ENCODE measurements at regions of chr9 and their contacts with region 1.

Region 1: GRCh38 chr9:124852829-124853531 is at the start of gene WDR38:
- DNase-seq: peak; percentile 94
- H3K27ac ChIP-seq: peak within 1 kb of the TSS; percentile 69
- CTCF ChIP-seq: peak; percentile 100

Region 2: DNA sequence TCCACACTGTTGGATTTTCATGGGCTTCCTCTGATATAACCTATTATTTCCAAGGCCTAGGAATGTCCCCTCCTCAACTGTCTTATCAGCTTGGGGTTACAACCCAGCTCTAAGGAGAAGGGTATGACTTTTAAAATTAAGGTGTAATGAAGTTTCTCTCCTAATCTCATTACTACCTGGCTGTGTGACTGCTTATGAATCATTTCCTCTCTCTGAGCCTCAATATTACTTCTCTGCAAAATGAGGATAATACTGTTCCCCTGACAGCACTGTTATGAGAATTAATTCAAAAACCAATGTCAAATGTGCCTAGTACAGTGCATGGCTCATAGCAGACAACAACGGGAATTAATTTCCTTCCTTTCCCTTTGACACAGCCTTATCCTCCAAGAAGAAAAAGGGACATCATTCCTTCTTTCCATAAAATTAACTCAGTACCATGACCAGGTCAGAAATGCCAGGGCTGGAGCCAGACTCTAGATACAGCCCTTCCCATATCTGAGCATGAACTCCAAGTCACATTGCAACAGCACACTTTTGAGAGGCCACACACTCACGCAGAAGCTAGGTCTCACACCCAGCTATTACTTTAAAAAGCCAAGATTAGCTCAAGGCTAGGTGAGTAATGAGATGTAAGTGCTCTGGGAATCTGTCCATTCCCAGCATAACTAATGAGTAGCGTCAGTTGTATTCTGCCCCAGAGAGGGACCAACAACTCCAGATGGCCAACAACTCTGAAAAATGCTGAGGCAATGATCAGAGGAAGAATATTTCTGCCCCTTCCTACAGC is 200.6 kb before region 1 on chr9:
- CTCF ChIA-PET with region 1: no interaction called
- POLR2A ChIA-PET with region 1: no interaction called
- DNase-seq: peak; percentile 97
- H3K27ac ChIP-seq: no peak overlapping the region; the same call in 1 of the 2 replicates
- CTCF ChIP-seq: no peak

Region 3: GRCh38 chr9:124697326-124698200 is 155.4 kb before region 1 on chr9:
- CTCF ChIA-PET with region 1: no interaction called
- POLR2A ChIA-PET with region 1: interaction called, 11 read pairs
- DNase-seq: peak; percentile 42
- H3K27ac ChIP-seq: no peak overlapping the region
- CTCF ChIP-seq: no peak

Region 4: DNA sequence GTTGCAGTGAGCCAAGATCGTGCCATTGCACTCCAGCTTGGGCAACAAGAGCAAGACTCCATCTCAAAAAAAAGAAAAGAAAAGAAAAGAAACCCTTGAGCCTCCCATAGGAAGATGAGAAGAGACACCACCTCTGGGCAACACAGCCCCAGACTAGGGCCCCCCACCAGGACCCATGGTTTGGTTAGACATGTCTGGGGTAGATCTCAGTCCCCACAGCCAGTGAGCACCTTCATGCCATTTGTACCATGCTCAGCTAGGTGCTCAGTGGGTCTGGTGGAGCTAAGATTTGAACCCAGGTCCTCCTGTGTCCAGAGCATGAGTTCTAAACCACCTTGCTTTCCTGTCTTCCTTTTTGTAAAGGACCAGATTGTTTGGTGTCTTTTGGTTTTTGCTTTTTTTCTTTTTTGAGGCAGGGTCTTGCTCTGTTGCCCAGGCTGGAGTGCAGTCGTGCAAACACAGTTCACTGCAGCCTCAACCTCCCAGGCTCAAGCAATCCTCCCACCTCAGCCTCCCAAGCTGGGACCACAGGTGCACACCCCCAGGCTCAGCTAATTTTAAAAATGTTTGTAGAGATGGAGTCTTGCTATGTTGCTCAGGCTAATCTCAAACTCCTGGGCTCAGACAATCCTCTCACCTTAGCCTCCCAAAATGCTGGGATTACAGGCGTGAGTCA is 64.3 kb before region 1 on chr9:
- CTCF ChIA-PET with region 1: interaction called, 40 read pairs
- POLR2A ChIA-PET with region 1: no interaction called
- DNase-seq: no peak
- H3K27ac ChIP-seq: peak overlapping the region; percentile 28; the same call in 1 of the 2 replicates
- CTCF ChIP-seq: no peak

Region 5: DNA sequence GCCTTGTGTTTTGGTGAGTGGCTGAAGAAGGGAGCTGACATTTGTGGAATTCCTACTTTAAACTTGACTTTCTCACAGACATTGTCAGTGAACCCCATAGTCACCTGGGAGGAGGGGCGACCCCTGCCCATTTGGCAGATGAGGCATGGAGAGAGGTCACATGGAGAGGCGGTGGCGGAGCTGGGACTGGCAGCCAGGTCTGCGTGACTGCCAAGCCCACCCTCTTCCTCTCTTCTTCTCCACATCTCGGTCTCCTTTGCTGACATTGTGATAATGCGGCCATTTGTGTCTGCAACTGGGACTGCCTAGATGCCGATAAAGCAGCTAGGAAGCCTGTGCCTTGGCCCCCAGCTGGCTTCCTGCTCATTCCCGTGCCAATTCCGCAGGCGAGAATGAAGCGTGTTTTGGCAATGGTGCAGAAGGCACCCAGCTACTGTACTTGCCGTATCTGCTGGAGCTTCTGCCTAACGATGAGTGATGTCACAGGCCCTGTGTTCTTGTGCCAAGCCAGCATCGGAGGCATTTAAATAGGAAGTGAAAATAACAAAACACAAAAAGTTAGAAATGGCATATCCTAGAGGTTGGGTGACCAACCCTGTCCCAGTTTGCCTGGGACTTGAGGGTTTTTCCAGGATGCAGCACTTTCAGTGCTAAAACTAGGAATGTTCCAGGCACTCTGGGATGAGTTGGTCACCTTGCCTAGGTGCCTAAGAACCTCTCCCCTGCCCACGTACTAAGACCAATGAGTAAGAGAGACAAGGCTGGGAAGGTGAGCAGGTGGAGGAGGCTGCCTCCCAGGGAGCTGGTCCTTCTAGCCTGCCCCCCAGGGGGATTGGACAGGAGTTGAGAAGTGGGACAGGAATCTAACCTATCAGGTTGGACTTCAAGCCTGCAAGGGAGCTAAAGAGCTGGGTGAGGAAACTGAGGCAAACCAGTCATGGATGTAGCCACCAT is 52.4 kb before region 1 on chr9:
- CTCF ChIA-PET with region 1: interaction called, 40 read pairs
- POLR2A ChIA-PET with region 1: no interaction called
- DNase-seq: peak; percentile 52
- H3K27ac ChIP-seq: peak overlapping the region; percentile 73
- CTCF ChIP-seq: no peak

Region 6: GRCh38 chr9:124818431-124819281 is 34.3 kb before region 1 on chr9:
- CTCF ChIA-PET with region 1: interaction called, 38 read pairs
- POLR2A ChIA-PET with region 1: interaction called, 3 read pairs
- DNase-seq: peak; percentile 82
- H3K27ac ChIP-seq: peak overlapping the region; percentile 99
- CTCF ChIP-seq: no peak; the same call in 1 of the 2 replicates

Region 7: GRCh38 chr9:124894741-124895170 is 41.8 kb after region 1 on chr9:
- CTCF ChIA-PET with region 1: interaction called, 13 read pairs
- POLR2A ChIA-PET with region 1: interaction called, 3 read pairs
- DNase-seq: peak; percentile 48
- H3K27ac ChIP-seq: no peak overlapping the region
- CTCF ChIP-seq: peak; percentile 56

Region 8: DNA sequence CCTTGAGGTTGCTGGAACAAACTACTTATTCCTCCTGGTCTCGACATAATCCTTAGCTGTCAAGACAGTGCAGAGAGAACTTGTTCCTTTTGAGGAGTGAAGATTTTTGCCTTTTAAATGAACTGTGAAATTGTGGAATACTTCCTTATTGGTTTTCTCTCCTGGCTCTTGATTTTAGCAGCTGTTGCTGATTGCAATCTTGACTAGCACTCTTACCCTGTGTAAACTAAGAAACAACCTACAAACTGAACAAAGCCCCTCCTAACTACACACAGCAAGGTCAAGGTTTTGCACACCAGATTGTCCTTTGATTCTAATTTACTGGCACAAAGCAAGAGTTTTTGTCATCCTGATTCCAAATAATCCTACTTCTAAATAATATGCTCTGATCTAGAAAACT is 171.9 kb after region 1 on chr9:
- CTCF ChIA-PET with region 1: no interaction called
- POLR2A ChIA-PET with region 1: no interaction called
- DNase-seq: no peak
- H3K27ac ChIP-seq: no peak overlapping the region
- CTCF ChIP-seq: no peak

Region 9: GRCh38 chr9:125200210-125201047 is 347.4 kb after region 1 on chr9 and contains the start of gene RABEPK:
- CTCF ChIA-PET with region 1: no interaction called
- POLR2A ChIA-PET with region 1: no interaction called
- DNase-seq: peak; percentile 98
- H3K27ac ChIP-seq: peak within 1 kb of the TSS; percentile 95
- CTCF ChIP-seq: no peak

Measured in RWPE1 (cell line).